WTC11 (cell line): ENCODE measurements at regions of chr9 and their contacts with region 1.

Region 1: GRCh38 chr9:36855448-36856315 is 178.4 kb downstream of the PAX5 start:
- DNase-seq: peak; percentile 77
- ATAC-seq: peak; percentile 90
- H3K4me3 Mint-ChIP-seq: no peak overlapping the region
- H3K27ac Mint-ChIP-seq: no peak overlapping the region
- H3K4me1 Mint-ChIP-seq: peaks cover 37% of the 10 kb centered on the region
- H3K27me3 Mint-ChIP-seq: no peaks in the 10 kb centered on the region; the same call in 1 of the 2 replicates
- CTCF ChIP-seq: peak; percentile 37; the same call in 1 of the 2 replicates

Region 2: DNA sequence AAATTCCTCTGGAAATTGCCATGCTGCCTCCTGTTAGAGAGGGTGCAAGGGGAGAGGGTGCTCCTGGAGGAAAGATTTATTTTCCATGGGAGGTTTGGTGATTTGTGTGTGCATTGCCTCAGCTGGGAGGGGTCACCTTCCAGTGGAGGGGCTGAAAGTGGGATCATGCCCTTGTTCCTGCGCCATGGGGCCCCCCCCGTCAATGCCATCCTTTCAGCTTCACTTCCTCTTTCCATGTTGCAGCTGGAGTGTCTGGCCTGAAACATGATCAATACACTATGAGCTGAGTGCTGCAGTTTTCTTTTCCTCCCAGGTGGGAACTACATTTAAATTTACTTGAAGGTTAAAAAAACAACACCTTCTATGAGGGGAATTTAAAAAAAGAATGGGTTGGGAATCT is 106.2 kb before region 1 on chr9:
- CTCF ChIA-PET with region 1: no interaction called
- POLR2A ChIA-PET with region 1: no interaction called
- DNase-seq: no peak
- ATAC-seq: no peak
- H3K4me3 Mint-ChIP-seq: no peak overlapping the region
- H3K27ac Mint-ChIP-seq: no peak overlapping the region
- H3K4me1 Mint-ChIP-seq: no peaks in the 10 kb centered on the region
- H3K27me3 Mint-ChIP-seq: peaks cover 13% of the 10 kb centered on the region
- CTCF ChIP-seq: no peak

Region 3: DNA sequence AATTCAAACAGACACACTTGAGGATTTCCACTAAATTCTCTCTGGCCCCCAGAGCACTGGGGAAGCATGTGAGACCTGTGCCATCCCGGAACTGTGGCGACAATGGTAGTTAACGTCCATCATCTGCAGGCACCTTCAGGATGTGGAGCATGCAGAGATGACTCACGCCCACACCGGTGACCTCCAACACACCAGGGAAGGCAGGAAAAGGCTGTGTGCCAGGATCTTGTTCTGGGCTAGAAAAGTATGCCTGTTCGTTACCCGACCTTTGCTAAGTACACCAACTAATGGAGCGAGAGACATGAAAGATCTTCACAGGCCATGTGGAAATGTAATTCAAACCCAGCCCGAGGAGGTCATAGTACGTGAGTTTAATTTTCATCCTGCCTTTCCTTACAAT is 74.1 kb before region 1 on chr9:
- CTCF ChIA-PET with region 1: no interaction called
- POLR2A ChIA-PET with region 1: no interaction called
- DNase-seq: no peak
- ATAC-seq: no peak
- H3K4me3 Mint-ChIP-seq: no peak overlapping the region
- H3K27ac Mint-ChIP-seq: no peak overlapping the region
- H3K4me1 Mint-ChIP-seq: peaks cover 9% of the 10 kb centered on the region
- H3K27me3 Mint-ChIP-seq: peaks cover 6% of the 10 kb centered on the region; the same call in 1 of the 2 replicates
- CTCF ChIP-seq: no peak

Region 4: GRCh38 chr9:36798350-36799065 is 57.2 kb before region 1 on chr9:
- CTCF ChIA-PET with region 1: interaction called, 13 read pairs
- POLR2A ChIA-PET with region 1: no interaction called
- DNase-seq: no peak
- ATAC-seq: peak; percentile 79
- H3K4me3 Mint-ChIP-seq: no peak overlapping the region
- H3K27ac Mint-ChIP-seq: no peak overlapping the region
- H3K4me1 Mint-ChIP-seq: peaks cover 18% of the 10 kb centered on the region
- H3K27me3 Mint-ChIP-seq: no peaks in the 10 kb centered on the region; the same call in none of the 2 replicates
- CTCF ChIP-seq: no peak

Region 5: DNA sequence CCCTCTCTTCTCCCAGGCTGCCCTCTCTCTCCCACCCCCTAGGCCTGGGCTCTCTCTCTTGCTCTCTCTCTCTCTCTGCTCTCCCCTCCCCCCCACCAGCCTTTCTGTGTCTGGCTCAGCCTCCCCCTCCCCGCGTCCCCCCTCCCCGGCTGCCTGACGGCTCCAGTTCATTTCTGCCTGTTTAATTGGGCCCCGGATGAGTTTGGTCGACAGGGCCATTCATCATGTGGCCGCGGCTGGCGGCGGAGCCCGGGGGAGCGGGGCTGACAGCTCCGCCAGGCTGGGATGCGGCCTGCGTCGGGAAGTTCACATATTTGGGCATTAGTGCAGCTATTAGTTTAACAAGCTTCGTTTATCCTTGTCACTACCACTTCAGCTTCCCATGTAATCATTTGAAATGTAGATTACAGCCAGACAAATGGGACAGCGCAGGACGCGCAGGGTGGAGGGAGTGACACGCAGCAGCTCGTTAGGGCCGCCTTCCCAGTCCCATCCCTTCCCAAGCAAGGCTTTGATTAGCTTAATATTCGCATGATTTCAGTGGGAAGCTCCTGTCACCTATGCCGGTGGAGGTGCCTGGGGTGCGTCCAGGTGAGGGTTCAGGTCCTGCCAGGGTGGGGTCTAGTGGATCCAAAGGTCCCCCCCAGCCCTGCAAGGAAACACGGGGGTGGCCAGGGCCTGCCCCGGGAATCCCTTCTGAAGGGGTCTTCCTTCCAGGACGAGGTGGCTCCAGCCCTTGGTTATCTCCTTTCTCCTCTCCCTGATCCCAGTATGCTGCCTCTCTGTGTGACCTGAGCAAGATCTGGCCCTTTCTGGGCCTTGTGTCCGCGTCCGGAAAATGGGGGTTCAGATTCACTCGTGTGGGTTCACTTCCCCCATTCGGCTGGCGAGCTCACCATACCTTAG is 36.5 kb before region 1 on chr9:
- CTCF ChIA-PET with region 1: interaction called, 26 read pairs
- POLR2A ChIA-PET with region 1: interaction called, 4 read pairs
- DNase-seq: peak; percentile 38
- ATAC-seq: peak; percentile 53
- H3K4me3 Mint-ChIP-seq: peak overlapping the region; percentile 66
- H3K27ac Mint-ChIP-seq: no peak overlapping the region
- H3K4me1 Mint-ChIP-seq: peaks cover 34% of the 10 kb centered on the region
- H3K27me3 Mint-ChIP-seq: peaks cover 26% of the 10 kb centered on the region
- CTCF ChIP-seq: no peak

Region 6: GRCh38 chr9:36840898-36841536 is 14.7 kb before region 1 on chr9:
- CTCF ChIA-PET with region 1: interaction called, 20 read pairs
- POLR2A ChIA-PET with region 1: no interaction called
- DNase-seq: no peak
- ATAC-seq: no peak
- H3K4me3 Mint-ChIP-seq: no peak overlapping the region
- H3K27ac Mint-ChIP-seq: no peak overlapping the region
- H3K4me1 Mint-ChIP-seq: no peaks in the 10 kb centered on the region; the same call in 1 of the 2 replicates
- H3K27me3 Mint-ChIP-seq: no peaks in the 10 kb centered on the region
- CTCF ChIP-seq: no peak

Region 7: DNA sequence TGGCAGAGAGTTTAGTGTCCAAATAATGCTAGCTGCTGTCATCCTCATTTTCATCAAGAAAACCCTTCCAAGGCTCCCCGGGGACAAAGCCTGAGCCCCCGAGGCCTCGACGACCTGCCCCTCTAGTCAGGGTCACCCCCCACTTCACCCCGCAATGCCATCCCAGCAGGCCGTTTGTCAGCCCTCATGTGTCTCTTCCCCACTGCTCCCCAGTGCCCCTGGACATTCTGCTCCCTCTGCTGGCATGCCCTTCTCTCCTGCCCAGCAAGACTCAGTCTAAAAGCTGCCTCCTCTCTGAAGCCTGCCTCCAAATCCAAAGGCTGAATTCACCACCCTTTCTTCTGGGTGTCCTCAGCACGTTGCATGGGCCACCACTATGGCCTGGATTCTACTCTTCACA is 119.0 kb after region 1 on chr9:
- CTCF ChIA-PET with region 1: interaction called, 10 read pairs
- POLR2A ChIA-PET with region 1: no interaction called
- DNase-seq: no peak
- ATAC-seq: peak; percentile 58
- H3K4me3 Mint-ChIP-seq: no peak overlapping the region
- H3K27ac Mint-ChIP-seq: no peak overlapping the region
- H3K4me1 Mint-ChIP-seq: peaks cover 3% of the 10 kb centered on the region
- H3K27me3 Mint-ChIP-seq: no peaks in the 10 kb centered on the region
- CTCF ChIP-seq: no peak